PC-3 (cell line): ENCODE measurements at regions of chr4 and their contacts with region 1.

Region 1: GRCh38 chr4:138576684-138577083 is 334.5 kb upstream of the SLC7A11 start:
- DNase-seq: peak; percentile 64
- ATAC-seq: peak; percentile 33; the same call in 1 of the 2 replicates
- H3K4me3 ChIP-seq: no peak overlapping the region
- H3K27ac ChIP-seq: no peak overlapping the region
- H3K4me1 ChIP-seq: no peaks in the 10 kb centered on the region
- H3K27me3 ChIP-seq: no peaks in the 10 kb centered on the region
- CTCF ChIP-seq: peak; percentile 75

Region 2: GRCh38 chr4:138297743-138298405 is 278.8 kb before region 1 on chr4:
- CTCF ChIA-PET with region 1: no interaction called
- POLR2A ChIA-PET with region 1: no interaction called
- intact Hi-C with region 1: no loop called
- DNase-seq: no peak
- ATAC-seq: no peak
- H3K4me3 ChIP-seq: no peak overlapping the region
- H3K27ac ChIP-seq: no peak overlapping the region
- H3K4me1 ChIP-seq: no peaks in the 10 kb centered on the region
- H3K27me3 ChIP-seq: no peaks in the 10 kb centered on the region
- CTCF ChIP-seq: no peak

Region 3: DNA sequence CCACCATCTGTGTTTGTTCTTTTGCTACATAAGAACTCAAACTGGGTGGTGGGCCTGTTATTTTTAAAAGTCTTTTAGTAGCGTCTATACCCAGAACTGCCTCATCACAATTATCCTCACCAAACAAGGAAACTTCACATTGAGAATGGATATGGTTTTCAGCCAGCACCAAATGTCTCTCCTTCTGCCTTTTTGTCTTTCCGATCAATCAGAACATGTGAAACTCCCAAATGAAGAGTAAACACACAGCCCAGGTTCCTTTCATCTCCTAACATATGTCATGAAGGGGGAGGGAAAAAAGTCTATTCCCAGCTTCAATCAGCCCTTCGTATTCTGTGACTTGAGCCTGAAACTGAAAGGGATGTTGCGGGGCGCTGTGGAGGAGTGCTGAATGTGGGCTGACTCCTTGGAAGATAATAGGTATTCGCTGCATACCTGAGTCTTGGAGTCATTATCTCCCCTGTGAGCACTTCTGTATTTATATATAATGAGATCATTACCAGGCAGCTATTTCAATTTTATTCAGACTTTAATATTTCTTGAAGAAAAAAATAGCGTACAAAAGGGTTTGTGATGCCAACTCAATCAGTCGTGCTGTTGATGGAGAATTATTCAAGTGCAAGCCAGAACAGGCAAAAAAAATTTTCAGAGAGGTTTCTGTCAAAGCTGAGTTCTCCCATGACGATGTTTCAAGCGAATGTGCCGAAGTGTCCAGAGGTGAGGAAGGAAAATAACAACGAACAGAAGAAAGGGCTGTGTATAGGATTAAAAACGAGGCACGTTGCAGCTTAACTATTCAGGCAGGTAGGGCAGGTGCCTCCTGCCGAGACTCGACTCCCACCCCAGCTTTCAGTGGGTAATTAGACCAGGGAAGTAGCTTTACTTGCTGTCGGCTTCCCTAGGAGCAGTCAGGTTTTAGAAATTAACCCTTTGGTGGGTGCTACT is 275.0 kb after region 1 on chr4:
- CTCF ChIA-PET with region 1: no interaction called
- POLR2A ChIA-PET with region 1: no interaction called
- intact Hi-C with region 1: no loop called
- DNase-seq: no peak
- ATAC-seq: no peak
- H3K4me3 ChIP-seq: no peak overlapping the region
- H3K27ac ChIP-seq: no peak overlapping the region
- H3K4me1 ChIP-seq: no peaks in the 10 kb centered on the region
- H3K27me3 ChIP-seq: 0 out of 2 replicates have a peak, but pooled peaks cover 8% of the 10 kb centered on the region
- CTCF ChIP-seq: no peak

Region 4: GRCh38 chr4:138870737-138871554 is 294.3 kb after region 1 on chr4:
- CTCF ChIA-PET with region 1: interaction called, 6 read pairs
- POLR2A ChIA-PET with region 1: no interaction called
- intact Hi-C with region 1: loop called (anchors 2 kb)
- DNase-seq: peak; percentile 80
- ATAC-seq: peak; percentile 67
- H3K4me3 ChIP-seq: no peak overlapping the region
- H3K27ac ChIP-seq: no peak overlapping the region
- H3K4me1 ChIP-seq: peaks cover 5% of the 10 kb centered on the region
- H3K27me3 ChIP-seq: no peaks in the 10 kb centered on the region
- CTCF ChIP-seq: peak; percentile 84